Esophagus squamous epithelium (tissue), 5 donors: ENCODE measurements at regions of chr3 and their contacts with region 1.

Region 1: GRCh38 chr3:190120269-190121060 is at the start of gene P3H2:
- DNase-seq: no peak
- H3K4me3 ChIP-seq: peak within 1 kb of the TSS; percentile 68 to 95 (median 76)
- H3K27ac ChIP-seq: peak within 1 kb of the TSS; percentile 81 to 90 (median 86)
- H3K4me1 ChIP-seq: peaks cover 7 to 58% (median 9%) of the 10 kb centered on the region in 3 donors
- H3K27me3 ChIP-seq: peaks cover 0 to 9% (median 0%) of the 10 kb centered on the region in 4 donors
- CTCF ChIP-seq: peak in 5 of 6 experiments; percentile 35 to 54 (median 44)
- POLR2A ChIP-seq: peak in 1 of 4 donors; percentile 50
- total RNA-seq, gene P3H2: 16.5 to 41.2 (median 34.0) TPM

Region 2: DNA sequence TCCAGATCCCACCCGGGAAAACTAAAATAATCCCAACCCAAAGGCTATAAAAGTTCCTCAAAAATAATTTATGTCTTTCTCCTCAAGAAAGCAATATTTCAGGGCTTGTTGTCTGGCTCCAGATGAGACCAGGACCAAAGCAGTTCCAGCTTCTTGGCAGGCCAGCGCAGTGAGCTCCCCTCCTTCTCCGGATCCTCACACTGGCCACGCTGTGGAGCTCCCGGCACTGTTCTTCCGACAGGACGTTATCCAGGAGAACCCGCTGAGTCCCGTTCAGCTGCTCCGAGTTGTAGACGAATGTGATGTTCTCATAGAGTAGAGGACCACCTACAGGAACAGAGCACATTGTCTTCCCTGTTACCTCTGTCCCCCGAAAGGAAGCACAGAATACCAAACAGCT is 146.1 kb before region 1 on chr3:
- intact Hi-C with region 1: loop called (anchors 5 kb)
- DNase-seq: no peak
- H3K4me3 ChIP-seq: no peak overlapping the region
- H3K27ac ChIP-seq: no peak overlapping the region
- H3K4me1 ChIP-seq: peaks cover 0 to 5% (median 0%) of the 10 kb centered on the region in 3 donors
- H3K27me3 ChIP-seq: no peaks in the 10 kb centered on the region
- CTCF ChIP-seq: no peak
- POLR2A ChIP-seq: no peak

Region 3: DNA sequence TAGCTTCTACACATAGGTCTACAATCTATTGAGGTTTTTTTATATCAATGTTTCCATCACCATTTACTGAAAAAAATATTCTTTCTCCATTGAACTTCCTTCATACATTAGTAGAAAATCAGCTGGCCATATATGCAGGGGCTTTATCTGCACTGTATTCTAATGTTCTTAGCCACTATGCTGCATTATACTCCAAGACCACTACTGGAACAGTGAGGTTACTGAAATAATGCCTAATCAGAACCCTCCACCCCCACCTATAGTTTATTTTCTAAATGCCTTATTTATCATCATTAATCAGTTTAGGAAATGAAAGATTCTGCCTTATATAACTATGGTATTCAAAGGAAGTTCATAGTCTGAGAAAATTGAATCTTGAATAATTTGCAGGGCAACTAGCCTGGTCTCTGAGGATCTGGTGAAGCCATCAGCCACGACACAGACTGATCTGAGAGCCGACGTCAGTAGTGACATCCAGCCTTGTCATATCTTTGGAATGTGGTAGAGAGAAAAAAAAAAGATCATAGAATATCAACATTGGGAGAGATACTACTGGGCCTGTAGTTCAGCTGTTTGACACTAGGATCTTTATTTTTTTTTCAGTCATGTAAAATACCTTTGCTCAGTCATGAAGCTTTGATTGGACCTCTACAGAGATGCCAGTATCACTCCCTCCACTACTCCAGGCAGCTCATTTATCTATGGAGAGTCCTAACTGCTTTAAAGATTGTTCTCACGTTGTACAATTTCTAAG is 66.4 kb before region 1 on chr3:
- intact Hi-C with region 1: no loop called
- DNase-seq: no peak
- H3K4me3 ChIP-seq: no peak overlapping the region
- H3K27ac ChIP-seq: no peak overlapping the region
- H3K4me1 ChIP-seq: peaks cover 2 to 34% (median 5%) of the 10 kb centered on the region in 3 donors
- H3K27me3 ChIP-seq: no peaks in the 10 kb centered on the region
- CTCF ChIP-seq: peak in 1 of 6 experiments; percentile 44
- POLR2A ChIP-seq: no peak